ENCODE measurements at regions of chr10 and their contacts with region 1.

Region 1: DNA sequence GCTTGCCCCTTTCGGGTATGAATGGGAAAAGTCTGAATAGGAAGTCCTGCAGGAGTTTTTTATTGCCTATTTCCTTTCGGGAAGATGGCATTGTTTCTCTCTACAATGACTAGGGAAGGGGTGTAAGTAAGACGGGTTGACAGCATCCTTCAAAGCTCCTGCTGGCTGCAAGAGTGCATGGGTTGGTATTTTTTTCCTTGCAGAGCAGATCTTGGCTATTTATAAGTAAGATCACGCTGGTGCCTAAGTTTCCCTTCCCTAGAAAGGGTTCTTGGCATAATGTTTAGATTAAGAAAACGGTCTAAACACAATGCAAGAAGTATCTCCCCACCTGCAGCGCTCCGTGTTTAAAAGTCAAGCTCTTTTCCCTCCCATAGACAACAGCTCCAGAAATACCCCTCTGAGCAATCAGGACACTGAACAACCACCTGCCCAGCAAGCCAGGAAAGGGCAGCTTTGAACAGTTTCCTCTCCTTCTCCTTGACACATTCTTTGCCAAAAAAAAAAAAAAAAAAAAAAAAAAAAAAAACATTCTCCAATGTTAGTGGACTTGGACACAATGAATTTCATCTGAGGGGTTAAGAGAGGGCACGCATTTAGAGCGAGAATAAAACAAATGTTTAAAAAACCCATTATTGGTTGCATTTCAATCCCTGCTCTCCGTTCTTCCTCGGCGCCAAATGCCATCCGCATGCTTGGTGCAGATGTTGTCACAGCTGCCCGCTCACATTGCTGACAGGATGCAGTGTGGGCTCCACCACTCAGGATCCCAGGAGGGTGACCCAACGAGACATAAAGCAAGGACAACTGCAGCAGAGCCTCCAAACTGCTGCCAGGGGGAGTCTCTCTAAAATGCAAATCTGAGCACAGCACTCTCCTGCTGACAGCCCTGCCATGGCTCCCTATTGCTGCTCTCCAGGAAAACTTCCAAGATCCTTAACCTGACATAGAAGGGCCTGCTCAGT is 427.4 kb upstream of the MGMT start:
- DNase-seq: peak; percentile 71
- H3K4me3 ChIP-seq: peak overlapping the region in 1 of 3 experiments; percentile 19
- H3K27ac ChIP-seq: peak overlapping the region; percentile 48
- H3K4me1 ChIP-seq: peaks cover 65% of the 10 kb centered on the region
- H3K27me3 ChIP-seq: no peaks in the 10 kb centered on the region
- CTCF ChIP-seq: peak in 1 of 2 donors; percentile 8
- POLR2A ChIP-seq: no peak

Region 2: DNA sequence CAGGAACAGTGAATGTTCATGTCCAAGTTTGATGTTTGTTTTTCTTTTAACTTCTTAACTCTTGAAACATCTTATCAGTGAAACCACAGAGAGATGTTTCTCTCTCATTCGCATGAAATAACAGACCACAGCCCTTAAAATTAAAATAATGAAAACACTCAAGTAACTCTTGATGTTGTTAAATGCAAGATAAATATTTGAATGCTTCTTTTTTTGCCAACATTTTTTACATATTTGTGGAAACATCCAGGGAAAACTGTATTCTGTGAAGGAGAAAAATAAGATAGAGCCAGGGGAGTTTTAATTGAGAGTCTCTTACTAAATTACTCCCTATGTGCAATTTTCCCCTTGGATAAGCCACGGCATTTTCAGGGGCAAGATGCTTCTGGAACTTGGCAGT is 65.6 kb after region 1 on chr10:
- CTCF ChIA-PET with region 1: no interaction called
- POLR2A ChIA-PET with region 1: no interaction called
- dilution Hi-C with region 1: no loop called
- intact Hi-C with region 1: loop called (anchors 2 kb)
- DNase-seq: peak; percentile 34
- H3K4me3 ChIP-seq: no peak overlapping the region
- H3K27ac ChIP-seq: peak overlapping the region; percentile 30
- H3K4me1 ChIP-seq: peaks cover 19% of the 10 kb centered on the region
- H3K27me3 ChIP-seq: no peaks in the 10 kb centered on the region
- CTCF ChIP-seq: no peak
- POLR2A ChIP-seq: no peak

Region 3: GRCh38 chr10:129165076-129165720 is 125.5 kb after region 1 on chr10:
- CTCF ChIA-PET with region 1: no interaction called
- POLR2A ChIA-PET with region 1: no interaction called
- dilution Hi-C with region 1: no loop called
- intact Hi-C with region 1: no loop called
- DNase-seq: no peak
- H3K4me3 ChIP-seq: no peak overlapping the region
- H3K27ac ChIP-seq: no peak overlapping the region
- H3K4me1 ChIP-seq: no peaks in the 10 kb centered on the region
- H3K27me3 ChIP-seq: no peaks in the 10 kb centered on the region
- CTCF ChIP-seq: no peak
- POLR2A ChIP-seq: no peak

Region 4: GRCh38 chr10:129219364-129219763 is 179.7 kb after region 1 on chr10:
- CTCF ChIA-PET with region 1: no interaction called
- POLR2A ChIA-PET with region 1: no interaction called
- dilution Hi-C with region 1: no loop called
- intact Hi-C with region 1: loop called (anchors 1 kb)
- DNase-seq: peak; percentile 53
- H3K4me3 ChIP-seq: no peak overlapping the region
- H3K27ac ChIP-seq: no peak overlapping the region
- H3K4me1 ChIP-seq: no peaks in the 10 kb centered on the region
- H3K27me3 ChIP-seq: no peaks in the 10 kb centered on the region
- CTCF ChIP-seq: no peak
- POLR2A ChIP-seq: no peak

Region 5: DNA sequence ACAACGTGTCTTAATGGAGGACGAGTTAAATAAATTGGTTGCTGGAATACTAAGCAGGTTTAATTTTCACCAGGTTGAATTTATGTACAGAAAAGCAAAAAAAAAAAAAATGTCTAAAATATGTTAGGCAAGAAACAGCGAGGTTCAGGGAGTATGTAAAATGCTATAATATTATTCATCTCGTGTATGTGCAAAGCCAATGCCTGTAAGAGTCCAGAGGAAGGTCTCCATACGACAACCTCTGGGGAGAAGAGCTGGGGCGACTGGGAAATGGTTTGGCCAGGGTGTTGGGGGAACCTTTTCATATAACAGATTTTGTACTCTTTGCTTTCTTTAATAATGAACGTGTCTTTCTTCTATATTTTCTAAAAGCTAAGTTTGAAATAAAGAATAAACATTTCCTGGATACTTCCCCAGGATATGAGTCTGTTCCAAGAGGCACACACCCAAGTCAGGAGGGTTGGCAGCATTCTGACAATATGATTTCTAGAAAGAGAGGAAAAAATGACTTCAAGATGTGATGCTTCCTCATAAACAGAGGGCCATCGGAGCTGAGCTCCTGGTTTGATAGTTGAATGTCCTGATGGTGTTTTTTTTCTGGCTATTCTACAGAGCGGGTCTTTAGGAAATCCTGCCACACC is 218.7 kb after region 1 on chr10:
- CTCF ChIA-PET with region 1: interaction called, 4 read pairs
- POLR2A ChIA-PET with region 1: no interaction called
- dilution Hi-C with region 1: no loop called
- intact Hi-C with region 1: loop called (anchors 1 kb)
- DNase-seq: peak; percentile 82
- H3K4me3 ChIP-seq: peak overlapping the region in 1 of 3 experiments; percentile 19
- H3K27ac ChIP-seq: peak overlapping the region; percentile 30
- H3K4me1 ChIP-seq: peaks cover 17% of the 10 kb centered on the region
- H3K27me3 ChIP-seq: no peaks in the 10 kb centered on the region
- CTCF ChIP-seq: no peak
- POLR2A ChIP-seq: no peak

Region 6: GRCh38 chr10:129305046-129305445 is 265.4 kb after region 1 on chr10:
- CTCF ChIA-PET with region 1: interaction called, 4 read pairs
- POLR2A ChIA-PET with region 1: no interaction called
- dilution Hi-C with region 1: no loop called
- intact Hi-C with region 1: loop called (anchors 1 kb)
- DNase-seq: peak; percentile 73
- H3K4me3 ChIP-seq: peak overlapping the region in 1 of 3 experiments; percentile 7
- H3K27ac ChIP-seq: peak overlapping the region; percentile 61
- H3K4me1 ChIP-seq: peaks cover 14% of the 10 kb centered on the region
- H3K27me3 ChIP-seq: no peaks in the 10 kb centered on the region
- CTCF ChIP-seq: no peak
- POLR2A ChIP-seq: no peak

Region 7: DNA sequence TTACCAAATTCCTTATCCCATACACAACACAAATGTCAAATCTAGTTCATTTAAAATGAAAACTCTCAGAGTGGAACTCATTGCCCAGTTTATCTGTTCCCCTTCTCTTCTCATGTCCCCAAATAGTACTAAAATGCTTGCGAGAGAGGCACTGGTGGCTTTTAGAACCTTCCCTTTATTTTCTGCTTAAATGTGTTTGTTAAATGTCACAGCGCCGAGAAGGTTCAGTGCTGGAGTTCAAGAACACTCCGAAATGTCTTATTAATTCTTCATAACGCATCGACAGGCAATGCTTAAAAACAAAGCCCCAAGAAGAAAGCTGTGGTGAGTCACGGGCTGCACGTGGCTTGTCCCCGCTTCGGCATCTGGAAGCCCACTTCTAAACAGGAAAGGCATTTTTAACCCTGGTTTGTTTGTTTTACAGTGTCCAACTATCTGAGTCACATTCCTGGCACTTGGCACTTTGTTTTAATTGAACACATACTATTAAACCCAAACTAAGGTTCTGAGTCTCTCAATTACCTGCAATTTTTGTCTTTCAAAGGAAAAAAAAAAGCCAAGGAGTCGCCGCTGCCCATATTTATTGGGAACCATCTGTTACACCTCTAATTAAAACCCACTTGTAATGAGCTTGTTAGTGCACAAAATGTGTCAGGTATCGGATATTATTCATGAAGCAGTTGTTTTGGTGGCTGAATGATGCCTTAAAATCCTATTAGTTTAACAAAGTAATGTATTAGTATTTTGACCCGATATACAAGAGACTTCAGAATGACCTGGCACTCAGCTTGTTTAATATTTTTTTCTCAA is 377.5 kb after region 1 on chr10:
- CTCF ChIA-PET with region 1: no interaction called
- POLR2A ChIA-PET with region 1: no interaction called
- dilution Hi-C with region 1: no loop called
- intact Hi-C with region 1: loop called (anchors 1 kb)
- DNase-seq: peak; percentile 59
- H3K4me3 ChIP-seq: no peak overlapping the region
- H3K27ac ChIP-seq: peak overlapping the region; percentile 62
- H3K4me1 ChIP-seq: peaks cover 17% of the 10 kb centered on the region
- H3K27me3 ChIP-seq: no peaks in the 10 kb centered on the region
- CTCF ChIP-seq: no peak
- POLR2A ChIP-seq: no peak

Measured in endothelial cell of umbilical vein (primary cell).